H1 (cell line): ENCODE measurements at regions of chr20 and their contacts with region 1.

Region 1: GRCh38 chr20:36605399-36606157 is at the start of gene RAB5IF:
- DNase-seq: peak; percentile 99 to 100
- H3K4me3 ChIP-seq: peak within 1 kb of the TSS; percentile 73 to 98 (median 95)
- H3K27ac ChIP-seq: peak within 1 kb of the TSS; percentile 78; the same call in 1 of the 2 replicates
- H3K4me1 ChIP-seq: peaks cover 0 to 4% (median 2%) of the 10 kb centered on the region in 4 experiments; a peak in 3 of 7 replicates
- H3K27me3 ChIP-seq: no peaks in the 10 kb centered on the region; a peak in 1 of 7 replicates
- CTCF ChIP-seq: peak; percentile 92 to 99 (median 94)
- EP300 ChIP-seq: no peak; a peak in 1 of 3 replicates
- POLR2A ChIP-seq: peak; percentile 66 to 90
- RAD21 ChIP-seq: peak; percentile 77 to 79
- total RNA-seq, gene RAB5IF: 94.2 and 95.5 TPM in 2 replicates

Region 2: GRCh38 chr20:36562724-36563123 is 42.9 kb before region 1 on chr20:
- CTCF ChIA-PET with region 1: interaction called, 17 read pairs
- POLR2A ChIA-PET with region 1: interaction called, 388 read pairs
- DNase-seq: no peak
- H3K4me3 ChIP-seq: no peak overlapping the region; a peak in 2 of 8 replicates
- H3K27ac ChIP-seq: no peak overlapping the region
- H3K4me1 ChIP-seq: peaks cover 6 to 9% (median 8%) of the 10 kb centered on the region in 4 experiments
- H3K27me3 ChIP-seq: no peaks in the 10 kb centered on the region
- CTCF ChIP-seq: no peak
- EP300 ChIP-seq: no peak
- POLR2A ChIP-seq: no peak
- RAD21 ChIP-seq: no peak

Region 3: DNA sequence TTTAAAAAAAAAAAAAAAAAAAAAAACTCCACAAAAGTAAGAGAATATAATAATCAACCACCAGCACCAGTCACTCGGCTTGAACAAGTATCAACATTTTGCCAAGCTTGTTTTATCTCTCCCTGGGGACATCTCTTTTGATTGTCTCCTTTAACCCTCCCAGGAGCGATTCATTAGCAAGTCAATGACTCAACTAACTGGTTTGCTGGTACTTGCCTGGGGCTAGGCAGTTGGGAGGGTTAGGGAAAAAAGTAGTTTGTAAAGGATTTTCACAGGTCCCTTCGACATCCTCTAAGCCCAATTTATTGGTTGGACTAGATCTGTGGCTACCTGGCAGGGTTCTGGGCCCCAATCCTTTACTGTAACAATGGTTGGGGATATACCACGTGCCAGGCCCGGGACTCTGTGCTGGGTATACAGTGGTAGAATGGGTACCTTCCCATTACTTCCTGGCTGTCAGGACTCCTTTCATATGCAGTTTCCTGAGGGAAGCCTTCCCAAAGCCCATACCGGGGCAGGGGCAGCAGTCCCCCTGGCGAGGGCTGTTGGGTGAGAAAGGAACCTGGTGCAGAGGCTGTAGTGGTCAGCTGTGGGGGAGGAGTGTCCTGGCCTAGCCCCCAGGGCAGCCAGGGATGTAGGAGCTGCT is 20.0 kb before region 1 on chr20:
- CTCF ChIA-PET with region 1: interaction called, 67 read pairs
- POLR2A ChIA-PET with region 1: interaction called, 388 read pairs
- DNase-seq: peak; percentile 68 to 80
- H3K4me3 ChIP-seq: peak overlapping the region in 2 of 4 experiments; percentile 29 to 42; a peak in 4 of 8 replicates
- H3K27ac ChIP-seq: peak overlapping the region; percentile 67
- H3K4me1 ChIP-seq: peaks cover 3 to 17% (median 11%) of the 10 kb centered on the region in 4 experiments; a peak in 6 of 7 replicates
- H3K27me3 ChIP-seq: no peaks in the 10 kb centered on the region
- CTCF ChIP-seq: no peak
- EP300 ChIP-seq: peak in 1 of 2 experiments; percentile 32; a peak in 1 of 3 replicates
- POLR2A ChIP-seq: peak in 1 of 2 experiments; percentile 17; a peak in 1 of 3 replicates
- RAD21 ChIP-seq: no peak; a peak in 2 of 4 replicates

Region 4: DNA sequence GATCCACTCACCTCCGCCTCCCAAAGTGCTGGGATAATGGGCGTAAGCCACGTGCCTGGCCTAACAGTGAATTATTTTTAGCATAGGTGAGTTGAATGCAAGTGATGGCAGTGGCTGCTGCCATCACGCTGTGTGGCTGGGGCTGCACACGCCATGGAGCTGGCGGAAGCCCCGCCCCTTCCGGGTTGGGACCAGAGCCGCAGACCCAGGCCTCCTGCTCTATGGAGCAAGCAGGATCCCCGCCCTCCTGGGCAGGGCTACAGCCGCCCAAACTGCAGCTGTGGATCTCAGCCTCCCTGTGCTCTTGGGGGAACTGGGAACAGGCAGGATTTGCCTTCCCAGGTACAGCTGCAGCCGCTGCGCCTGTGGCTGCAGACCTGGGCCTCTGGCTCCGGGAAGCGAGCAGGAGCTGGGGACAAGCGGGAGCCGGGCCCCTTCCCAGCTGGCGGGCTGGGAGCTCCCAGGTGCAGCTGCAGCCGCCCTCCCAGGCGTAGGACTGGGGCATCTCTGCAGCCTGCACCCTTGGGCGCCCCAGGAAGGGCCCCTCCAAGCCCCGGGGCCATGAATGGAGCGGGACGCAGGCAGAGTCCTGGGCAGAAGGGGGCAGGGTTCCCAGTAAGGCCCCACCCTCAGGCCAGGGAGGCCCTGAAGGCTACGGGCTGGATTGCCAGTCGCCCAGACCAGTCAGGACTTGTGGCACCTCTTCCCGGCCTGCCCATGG is 71.3 kb after region 1 on chr20:
- CTCF ChIA-PET with region 1: interaction called, 4 read pairs
- POLR2A ChIA-PET with region 1: interaction called, 10 read pairs
- DNase-seq: peak; percentile 89 to 94
- H3K4me3 ChIP-seq: peak overlapping the region; percentile 50 to 72 (median 61)
- H3K27ac ChIP-seq: peak overlapping the region; percentile 63; the same call in 1 of the 2 replicates
- H3K4me1 ChIP-seq: peaks cover 0 to 5% (median 2%) of the 10 kb centered on the region in 4 experiments; a peak in 4 of 7 replicates
- H3K27me3 ChIP-seq: no peaks in the 10 kb centered on the region
- CTCF ChIP-seq: no peak
- EP300 ChIP-seq: no peak
- POLR2A ChIP-seq: peak in 1 of 2 experiments; percentile 14; a peak in 2 of 3 replicates
- RAD21 ChIP-seq: 0 out of 4 replicates have a peak, but pooled peaks of 1 of the 2 experiments have one; percentile 10